Activated CD8-positive, alpha-beta T cell treated with anti-CD3 and anti-CD28 coated beads for 36 hours (primary cell): ENCODE measurements at regions of chr21 and their contacts with region 1.

Region 1: DNA sequence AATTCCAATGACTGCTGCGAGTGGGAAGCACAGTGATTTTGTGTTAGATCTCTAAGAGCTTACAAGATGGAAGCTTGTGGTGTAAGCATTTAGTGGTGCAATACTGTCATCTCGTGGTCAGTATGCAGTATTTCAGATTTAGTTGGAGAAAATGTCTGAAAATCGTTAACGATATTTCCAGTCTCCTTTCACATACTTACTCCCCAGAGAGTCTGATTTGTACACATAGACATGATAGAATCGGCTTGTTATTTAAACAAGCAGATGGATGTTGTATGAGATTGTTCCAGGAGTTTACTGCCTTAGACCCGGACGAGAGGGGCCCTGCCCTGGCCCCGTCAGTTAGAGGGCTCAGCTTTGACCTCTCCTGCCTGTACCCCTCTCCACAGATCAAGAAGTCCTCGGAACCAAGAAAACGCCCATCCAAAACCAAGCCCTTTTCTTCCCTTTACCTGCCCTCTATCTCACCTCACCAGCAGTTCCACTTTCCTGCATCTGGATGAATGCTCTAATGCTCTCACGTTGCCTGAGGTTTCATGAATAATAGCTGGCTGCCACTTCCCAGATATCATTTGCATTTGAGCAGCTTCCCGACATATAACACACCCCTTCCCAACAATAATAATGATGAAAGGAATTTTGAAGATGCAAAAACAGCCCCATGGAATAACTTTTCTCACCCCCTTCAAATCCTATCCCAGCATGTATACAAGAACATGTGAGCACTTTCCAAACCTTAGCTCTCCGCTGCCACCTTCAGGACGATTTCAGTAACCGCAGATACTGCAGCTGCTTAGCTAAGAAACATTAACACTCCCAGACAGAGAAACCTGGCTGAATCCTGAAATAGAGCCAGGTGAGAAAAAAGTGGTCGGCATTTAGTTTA is 247.3 kb downstream of the LTN1 start:
- DNase-seq: peak; percentile 78
- ATAC-seq: peak; percentile 84
- H3K4me3 Mint-ChIP-seq: no peak overlapping the region
- H3K27ac Mint-ChIP-seq: no peak overlapping the region
- H3K4me1 Mint-ChIP-seq: no peaks in the 10 kb centered on the region
- H3K27me3 Mint-ChIP-seq: no peaks in the 10 kb centered on the region
- CTCF ChIP-seq: peak; percentile 75

Region 2: GRCh38 chr21:26845066-26845758 is 1900.2 kb before region 1 on chr21 and contains the start of gene ADAMTS1:
- CTCF ChIA-PET with region 1: interaction called, 12 read pairs
- POLR2A ChIA-PET with region 1: no interaction called
- intact Hi-C with region 1: loop called (anchors 5 kb)
- DNase-seq: peak; percentile 26
- ATAC-seq: peak; percentile 55
- H3K4me3 Mint-ChIP-seq: peak within 1 kb of the TSS; percentile 55
- H3K27ac Mint-ChIP-seq: no peak within 1 kb of the TSS
- H3K4me1 Mint-ChIP-seq: peaks cover 32% of the 10 kb centered on the region
- H3K27me3 Mint-ChIP-seq: peaks cover 59% of the 10 kb centered on the region
- CTCF ChIP-seq: no peak
- total RNA-seq, gene ADAMTS1: 0.20 TPM in 1 of 2 experiments, not detected in the other

Region 3: GRCh38 chr21:28509031-28509430 is 236.3 kb before region 1 on chr21:
- CTCF ChIA-PET with region 1: interaction called, 165 read pairs
- POLR2A ChIA-PET with region 1: no interaction called
- intact Hi-C with region 1: no loop called
- DNase-seq: no peak
- ATAC-seq: no peak
- H3K4me3 Mint-ChIP-seq: no peak overlapping the region
- H3K27ac Mint-ChIP-seq: no peak overlapping the region
- H3K4me1 Mint-ChIP-seq: no peaks in the 10 kb centered on the region
- H3K27me3 Mint-ChIP-seq: peaks cover 3% of the 10 kb centered on the region
- CTCF ChIP-seq: no peak

Region 4: DNA sequence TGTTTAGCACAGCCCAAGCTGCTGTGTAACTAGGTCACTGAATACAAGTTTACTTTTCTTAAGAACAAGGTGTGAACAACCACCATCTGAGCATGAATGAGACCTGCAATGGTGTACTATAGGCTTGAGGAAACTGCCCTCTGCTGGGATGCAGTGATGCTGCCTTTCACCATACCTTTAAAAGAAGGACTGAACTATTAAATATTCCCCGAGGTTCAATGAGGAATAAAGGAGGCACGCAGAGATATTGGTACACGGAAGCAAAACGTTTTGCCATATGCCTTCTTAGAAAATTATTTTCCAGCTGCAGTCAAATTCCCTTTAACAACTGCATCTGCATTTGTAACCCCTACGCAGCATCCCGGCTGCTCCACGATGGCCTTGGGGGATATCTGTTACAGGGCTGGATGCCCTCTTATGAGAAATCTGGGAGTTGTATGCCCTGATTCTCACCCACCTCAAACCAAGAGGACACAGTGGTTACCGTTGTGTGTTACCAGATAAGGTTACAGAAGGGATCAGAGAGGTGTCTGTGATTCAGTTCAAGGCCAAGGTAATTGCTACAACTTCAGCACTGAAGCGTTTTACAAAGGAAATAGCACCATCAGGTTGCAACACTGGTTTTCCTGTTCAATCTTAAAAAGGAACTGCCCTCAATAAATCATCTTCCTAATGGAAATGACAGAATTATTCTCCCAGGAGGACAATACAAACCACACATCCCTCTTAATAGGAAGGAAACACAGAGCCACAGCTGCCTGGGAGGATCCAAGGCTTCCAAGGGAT is 223.2 kb before region 1 on chr21:
- CTCF ChIA-PET with region 1: interaction called, 165 read pairs
- POLR2A ChIA-PET with region 1: no interaction called
- intact Hi-C with region 1: loop called (anchors 1 kb)
- DNase-seq: peak; percentile 9
- ATAC-seq: peak; percentile 45
- H3K4me3 Mint-ChIP-seq: no peak overlapping the region
- H3K27ac Mint-ChIP-seq: no peak overlapping the region
- H3K4me1 Mint-ChIP-seq: peaks cover under 1% of the 10 kb centered on the region
- H3K27me3 Mint-ChIP-seq: peaks cover 2% of the 10 kb centered on the region
- CTCF ChIP-seq: no peak

Region 5: DNA sequence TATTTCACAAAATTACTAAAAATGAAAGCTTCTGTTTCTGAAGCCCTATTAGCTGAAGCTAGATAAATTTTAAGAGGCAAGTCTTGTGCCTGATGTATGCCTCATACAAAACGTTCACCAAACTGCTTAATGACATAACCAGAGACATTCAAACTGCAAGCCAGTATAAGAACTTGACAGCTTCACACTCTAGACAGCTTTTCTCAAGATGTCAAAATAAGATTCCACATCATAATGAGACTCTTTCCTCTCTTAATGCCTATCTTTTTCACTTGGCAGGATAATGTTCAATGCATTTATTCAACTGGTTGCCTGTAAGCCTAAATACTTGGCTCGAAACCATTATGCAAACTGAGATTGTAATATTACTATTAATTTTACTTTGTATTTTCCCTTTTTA is 176.7 kb before region 1 on chr21:
- CTCF ChIA-PET with region 1: interaction called, 12 read pairs
- POLR2A ChIA-PET with region 1: no interaction called
- intact Hi-C with region 1: no loop called
- DNase-seq: no peak
- ATAC-seq: no peak
- H3K4me3 Mint-ChIP-seq: no peak overlapping the region
- H3K27ac Mint-ChIP-seq: no peak overlapping the region
- H3K4me1 Mint-ChIP-seq: no peaks in the 10 kb centered on the region
- H3K27me3 Mint-ChIP-seq: no peaks in the 10 kb centered on the region
- CTCF ChIP-seq: no peak

Region 6: GRCh38 chr21:28761674-28762356 is 16.4 kb after region 1 on chr21:
- CTCF ChIA-PET with region 1: interaction called, 39 read pairs
- POLR2A ChIA-PET with region 1: interaction called, 3 read pairs
- intact Hi-C with region 1: no loop called
- DNase-seq: no peak
- ATAC-seq: no peak
- H3K4me3 Mint-ChIP-seq: no peak overlapping the region
- H3K27ac Mint-ChIP-seq: no peak overlapping the region
- H3K4me1 Mint-ChIP-seq: no peaks in the 10 kb centered on the region
- H3K27me3 Mint-ChIP-seq: no peaks in the 10 kb centered on the region
- CTCF ChIP-seq: no peak

Region 7: DNA sequence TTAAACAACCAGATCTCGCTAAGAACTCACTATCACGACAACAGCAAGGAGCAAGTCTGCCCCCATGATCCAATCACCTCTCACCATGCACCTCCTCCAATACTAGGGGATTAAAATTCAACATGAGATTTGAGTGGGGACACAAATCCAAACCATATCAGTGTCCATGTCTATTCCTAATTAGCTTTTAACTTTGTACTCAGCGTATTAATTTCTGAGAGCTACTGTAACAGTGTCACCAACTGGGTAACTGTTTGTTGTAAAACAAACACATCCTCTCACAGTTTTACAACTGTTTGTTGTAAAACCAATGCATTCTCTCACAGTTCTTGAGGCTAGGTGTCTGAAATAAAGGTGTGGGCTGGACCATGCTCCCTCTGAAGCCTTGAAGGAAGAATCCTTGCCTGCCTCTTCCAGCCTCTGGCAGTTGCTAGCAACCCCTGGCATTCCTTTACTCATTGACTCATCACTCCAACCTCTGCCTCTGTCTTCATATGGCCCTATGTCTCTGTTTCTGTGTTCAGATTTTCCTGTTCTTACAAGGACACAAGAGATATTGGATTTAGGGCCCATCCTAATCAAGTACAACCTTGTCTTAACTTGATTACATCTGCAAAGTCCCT is 126.1 kb after region 1 on chr21:
- CTCF ChIA-PET with region 1: no interaction called
- POLR2A ChIA-PET with region 1: no interaction called
- intact Hi-C with region 1: no loop called
- DNase-seq: no peak
- ATAC-seq: no peak
- H3K4me3 Mint-ChIP-seq: no peak overlapping the region
- H3K27ac Mint-ChIP-seq: no peak overlapping the region
- H3K4me1 Mint-ChIP-seq: no peaks in the 10 kb centered on the region
- H3K27me3 Mint-ChIP-seq: no peaks in the 10 kb centered on the region
- CTCF ChIP-seq: no peak

Region 8: GRCh38 chr21:28884976-28885852 is 139.8 kb after region 1 on chr21:
- CTCF ChIA-PET with region 1: interaction called, 18 read pairs
- POLR2A ChIA-PET with region 1: no interaction called
- intact Hi-C with region 1: no loop called
- DNase-seq: peak; percentile 94
- ATAC-seq: peak; percentile 96
- H3K4me3 Mint-ChIP-seq: peak overlapping the region; percentile 92
- H3K27ac Mint-ChIP-seq: peak overlapping the region; percentile 99
- H3K4me1 Mint-ChIP-seq: peaks cover 11% of the 10 kb centered on the region
- H3K27me3 Mint-ChIP-seq: no peaks in the 10 kb centered on the region
- CTCF ChIP-seq: no peak